ENCODE measurements at regions of chr15 and their contacts with region 1.

Region 1: GRCh38 chr15:42575188-42576039 is at the start of gene STARD9:
- DNase-seq: peak; percentile 96
- ATAC-seq: peak; percentile 95
- H3K4me3 ChIP-seq: peak within 1 kb of the TSS; percentile 76 to 93 (median 77)
- H3K27ac ChIP-seq: peak within 1 kb of the TSS; percentile 80
- H3K4me1 ChIP-seq: peaks cover 34% of the 10 kb centered on the region
- H3K27me3 ChIP-seq: no peaks in the 10 kb centered on the region; a peak in 1 of 5 replicates
- CTCF ChIP-seq: no peak; the same call in 1 of the 2 replicates
- EP300 ChIP-seq: 0 out of 4 replicates have a peak, but pooled peaks of 1 of the 2 experiments have one; percentile 4
- POLR2A ChIP-seq: peak; percentile 76 to 86
- RAD21 ChIP-seq: peak; percentile 19; the same call in 1 of the 2 replicates
- total RNA-seq, gene STARD9: 2.7 and 5.3 TPM in 2 replicates

Region 2: GRCh38 chr15:42548253-42549031 is 27.0 kb before region 1 on chr15 and contains the starts of genes HAUS2 and LRRC57:
- CTCF ChIA-PET with region 1: no interaction called
- POLR2A ChIA-PET with region 1: interaction called, 20 read pairs
- in situ Hi-C with region 1: no loop called
- intact Hi-C with region 1: no loop called
- DNase-seq: peak; percentile 77
- ATAC-seq: peak; percentile 95
- H3K4me3 ChIP-seq: peak within 1 kb of the TSS; percentile 87 to 96 (median 96)
- H3K27ac ChIP-seq: peak within 1 kb of the TSS; percentile 68
- H3K4me1 ChIP-seq: peaks cover 45% of the 10 kb centered on the region
- H3K27me3 ChIP-seq: no peaks in the 10 kb centered on the region; a peak in 1 of 5 replicates
- CTCF ChIP-seq: no peak
- EP300 ChIP-seq: no peak
- POLR2A ChIP-seq: peak; percentile 87 to 94
- RAD21 ChIP-seq: no peak
- total RNA-seq, gene HAUS2: 32.9 and 49.4 TPM in 2 replicates
- total RNA-seq, gene LRRC57: 14.8 and 26.0 TPM in 2 replicates

Region 3: DNA sequence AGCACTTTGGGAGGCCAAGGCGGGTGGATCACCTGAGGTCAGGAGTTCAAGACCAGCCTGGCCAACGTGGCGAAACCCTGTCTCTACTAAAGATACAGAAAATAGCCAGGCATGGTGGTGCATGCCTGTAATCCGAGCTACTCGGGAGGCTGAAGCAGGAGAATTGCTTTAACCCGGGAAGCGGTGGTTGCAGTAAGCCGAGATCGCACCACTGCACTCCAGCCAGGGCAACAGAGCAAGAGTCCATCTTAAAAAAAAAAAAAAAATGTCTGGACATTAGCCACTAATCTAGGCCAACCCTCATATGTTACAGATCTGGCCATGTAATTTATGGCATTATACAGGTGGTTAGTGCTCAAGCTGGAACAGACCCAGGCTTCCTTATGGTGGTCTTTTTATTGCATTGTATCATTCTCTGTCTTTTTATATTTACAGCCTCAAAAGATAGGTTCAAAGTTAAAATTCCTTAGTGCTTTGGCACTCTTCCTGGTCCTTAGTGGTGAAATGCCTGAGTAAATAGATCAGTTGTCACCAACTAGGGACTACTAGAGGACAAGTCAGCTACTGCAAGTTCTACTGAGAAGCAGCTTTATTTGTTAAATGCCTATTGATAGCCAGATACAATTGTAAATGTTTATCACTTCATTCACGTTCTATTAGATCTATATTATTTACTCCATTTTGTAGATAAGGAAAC is 16.0 kb after region 1 on chr15:
- CTCF ChIA-PET with region 1: interaction called, 4 read pairs
- POLR2A ChIA-PET with region 1: interaction called, 20 read pairs
- in situ Hi-C with region 1: no loop called
- intact Hi-C with region 1: no loop called
- DNase-seq: peak; percentile 84
- ATAC-seq: peak; percentile 93
- H3K4me3 ChIP-seq: peak overlapping the region in 2 of 3 experiments; percentile 22 to 31; a peak in 1 of 6 replicates
- H3K27ac ChIP-seq: peak overlapping the region; percentile 89
- H3K4me1 ChIP-seq: peaks cover 31% of the 10 kb centered on the region
- H3K27me3 ChIP-seq: no peaks in the 10 kb centered on the region
- CTCF ChIP-seq: peak; percentile 53
- EP300 ChIP-seq: 0 out of 4 replicates have a peak, but pooled peaks of 1 of the 2 experiments have one; percentile 13
- POLR2A ChIP-seq: no peak
- RAD21 ChIP-seq: no peak

Measured in HepG2 (cell line).